CD8-positive, alpha-beta T cell (primary cell): ENCODE measurements at regions of chr11 and their contacts with region 1.

Region 1: GRCh38 chr11:96293598-96294021 is 49.4 kb downstream of the MAML2 start:
- DNase-seq: peak in 1 of 9 experiments; percentile 45
- ATAC-seq: peak; percentile 31
- H3K4me3 ChIP-seq: no peak overlapping the region
- H3K4me3 Mint-ChIP-seq: peak overlapping the region; percentile 59
- H3K27ac ChIP-seq: peak overlapping the region in 1 of 2 experiments; percentile 24
- H3K27ac Mint-ChIP-seq: peak overlapping the region; percentile 78
- H3K4me1 ChIP-seq: peaks cover 51% of the 10 kb centered on the region
- H3K4me1 Mint-ChIP-seq: peaks cover 81% of the 10 kb centered on the region
- H3K27me3 ChIP-seq: no peaks in the 10 kb centered on the region
- H3K27me3 Mint-ChIP-seq: no peaks in the 10 kb centered on the region
- CTCF ChIP-seq: no peak

Region 2: DNA sequence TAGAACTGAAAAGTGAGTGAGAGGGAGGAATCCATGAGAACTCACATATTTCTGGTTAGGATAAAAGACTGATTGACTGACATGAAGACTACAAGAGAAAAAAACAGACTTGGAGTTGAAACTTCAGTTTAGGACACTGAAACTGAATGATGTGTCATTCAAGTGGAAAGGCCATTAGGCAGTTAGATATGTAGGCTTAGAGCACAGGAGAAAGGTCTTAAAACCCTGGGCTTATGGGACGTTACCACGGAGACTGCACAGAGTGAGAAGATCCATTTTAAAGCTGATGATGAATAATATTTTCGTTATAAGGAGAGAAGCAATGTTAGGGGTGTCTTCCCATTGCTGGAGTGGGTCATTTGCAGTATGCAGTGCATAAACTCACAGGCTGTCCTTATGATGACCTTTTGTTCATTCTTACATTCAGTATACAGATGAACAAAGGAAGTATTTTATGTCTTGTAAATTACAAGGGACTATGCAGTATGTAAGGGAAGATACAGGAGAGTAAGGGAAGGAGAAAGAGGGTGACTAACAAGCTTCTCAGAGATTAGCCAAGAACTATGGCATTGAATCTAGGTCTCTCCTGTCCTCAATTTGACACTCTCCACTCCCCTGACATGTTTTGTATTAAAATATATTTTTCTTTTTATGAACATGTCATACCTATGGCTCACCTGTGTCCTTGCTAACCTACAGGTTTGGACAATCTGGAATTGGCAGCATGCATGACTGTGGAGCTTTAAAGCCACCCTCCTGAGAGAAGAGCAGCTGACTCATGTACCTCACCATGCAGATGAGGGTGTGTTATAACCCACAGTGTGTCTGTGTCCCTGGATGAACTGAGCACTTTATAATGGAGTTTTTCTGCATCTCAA is 14.4 kb before region 1 on chr11:
- CTCF ChIA-PET with region 1: interaction called, 3 read pairs
- POLR2A ChIA-PET with region 1: no interaction called
- intact Hi-C with region 1: loop called in 1 of 2 experiments (anchors 2 kb)
- DNase-seq: no peak
- ATAC-seq: peak; percentile 51
- H3K4me3 ChIP-seq: no peak overlapping the region
- H3K4me3 Mint-ChIP-seq: no peak overlapping the region
- H3K27ac ChIP-seq: no peak overlapping the region
- H3K27ac Mint-ChIP-seq: peak overlapping the region; percentile 58
- H3K4me1 ChIP-seq: peaks cover 49% of the 10 kb centered on the region
- H3K4me1 Mint-ChIP-seq: peaks cover 74% of the 10 kb centered on the region
- H3K27me3 ChIP-seq: no peaks in the 10 kb centered on the region
- H3K27me3 Mint-ChIP-seq: no peaks in the 10 kb centered on the region
- CTCF ChIP-seq: no peak

Region 3: DNA sequence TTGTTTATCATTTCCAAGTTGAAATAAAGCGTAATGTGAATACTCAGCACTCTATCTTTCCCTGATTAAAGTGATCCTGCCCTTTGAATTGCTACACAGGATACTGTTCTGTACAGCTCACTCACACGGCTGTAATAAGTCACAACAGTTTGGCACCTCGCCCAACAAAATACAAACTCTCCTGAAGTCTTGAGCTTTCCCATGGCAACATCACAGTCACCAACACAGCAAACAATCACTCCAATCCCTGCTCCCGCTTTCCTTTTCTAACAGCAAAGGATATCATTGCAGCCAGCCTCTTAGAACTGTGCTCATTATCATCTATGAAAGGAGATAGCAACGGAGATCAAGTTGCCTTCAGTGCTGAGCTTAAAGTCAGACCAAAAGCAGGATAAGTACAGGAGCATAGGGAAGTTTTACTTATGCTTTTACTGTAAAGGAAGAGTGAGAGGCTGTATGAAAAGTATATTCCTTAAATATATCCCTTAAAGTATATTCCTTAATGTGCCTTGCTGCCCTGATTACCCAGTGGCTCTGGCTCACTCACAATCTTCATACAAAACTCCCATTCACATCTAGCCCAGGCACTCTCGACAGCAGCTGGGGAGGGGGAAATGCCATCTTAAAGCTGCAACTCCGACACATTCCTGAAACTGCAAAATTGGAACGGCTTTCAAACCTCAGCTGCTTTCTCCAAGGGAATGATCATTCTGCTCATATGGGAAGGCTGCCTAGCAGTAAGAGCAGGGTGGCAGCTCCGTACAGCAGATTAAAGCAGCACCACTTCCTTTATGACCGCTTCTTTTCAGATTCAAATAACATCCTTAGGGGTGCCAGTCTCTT is 13.5 kb after region 1 on chr11:
- CTCF ChIA-PET with region 1: no interaction called
- POLR2A ChIA-PET with region 1: no interaction called
- intact Hi-C with region 1: loop called in 1 of 2 experiments (anchors 2 kb)
- DNase-seq: peak in 4 of 9 experiments; percentile 10 to 50 (median 26)
- ATAC-seq: peak; percentile 61
- H3K4me3 ChIP-seq: peak overlapping the region in 1 of 2 experiments; percentile 5
- H3K4me3 Mint-ChIP-seq: peak overlapping the region; percentile 78
- H3K27ac ChIP-seq: peak overlapping the region in 1 of 2 experiments; percentile 3
- H3K27ac Mint-ChIP-seq: peak overlapping the region; percentile 84
- H3K4me1 ChIP-seq: peaks cover 41% of the 10 kb centered on the region
- H3K4me1 Mint-ChIP-seq: peaks cover 83% of the 10 kb centered on the region
- H3K27me3 ChIP-seq: no peaks in the 10 kb centered on the region
- H3K27me3 Mint-ChIP-seq: no peaks in the 10 kb centered on the region
- CTCF ChIP-seq: no peak